Activated B cell treated with CpG ODN at 0.5 μM for 24 hours (primary cell): ENCODE measurements at regions of chr2 and their contacts with region 1.

Region 1: GRCh38 chr2:226906163-226906693 is 70.4 kb downstream of the RHBDD1 start:
- DNase-seq: no peak
- ATAC-seq: peak; percentile 84
- H3K4me3 Mint-ChIP-seq: peak overlapping the region; percentile 73
- H3K27ac Mint-ChIP-seq: peak overlapping the region; percentile 94
- H3K4me1 Mint-ChIP-seq: peaks cover 97% of the 10 kb centered on the region
- H3K27me3 Mint-ChIP-seq: no peaks in the 10 kb centered on the region
- CTCF ChIP-seq: no peak

Region 2: GRCh38 chr2:224946895-224947294 is 1959.3 kb before region 1 on chr2:
- CTCF ChIA-PET with region 1: no interaction called
- POLR2A ChIA-PET with region 1: no interaction called
- intact Hi-C with region 1: loop called (anchors 5 kb)
- DNase-seq: no peak
- ATAC-seq: peak; percentile 65
- H3K4me3 Mint-ChIP-seq: peak overlapping the region; percentile 90
- H3K27ac Mint-ChIP-seq: peak overlapping the region; percentile 92
- H3K4me1 Mint-ChIP-seq: peaks cover 87% of the 10 kb centered on the region
- H3K27me3 Mint-ChIP-seq: no peaks in the 10 kb centered on the region
- CTCF ChIP-seq: no peak

Region 3: DNA sequence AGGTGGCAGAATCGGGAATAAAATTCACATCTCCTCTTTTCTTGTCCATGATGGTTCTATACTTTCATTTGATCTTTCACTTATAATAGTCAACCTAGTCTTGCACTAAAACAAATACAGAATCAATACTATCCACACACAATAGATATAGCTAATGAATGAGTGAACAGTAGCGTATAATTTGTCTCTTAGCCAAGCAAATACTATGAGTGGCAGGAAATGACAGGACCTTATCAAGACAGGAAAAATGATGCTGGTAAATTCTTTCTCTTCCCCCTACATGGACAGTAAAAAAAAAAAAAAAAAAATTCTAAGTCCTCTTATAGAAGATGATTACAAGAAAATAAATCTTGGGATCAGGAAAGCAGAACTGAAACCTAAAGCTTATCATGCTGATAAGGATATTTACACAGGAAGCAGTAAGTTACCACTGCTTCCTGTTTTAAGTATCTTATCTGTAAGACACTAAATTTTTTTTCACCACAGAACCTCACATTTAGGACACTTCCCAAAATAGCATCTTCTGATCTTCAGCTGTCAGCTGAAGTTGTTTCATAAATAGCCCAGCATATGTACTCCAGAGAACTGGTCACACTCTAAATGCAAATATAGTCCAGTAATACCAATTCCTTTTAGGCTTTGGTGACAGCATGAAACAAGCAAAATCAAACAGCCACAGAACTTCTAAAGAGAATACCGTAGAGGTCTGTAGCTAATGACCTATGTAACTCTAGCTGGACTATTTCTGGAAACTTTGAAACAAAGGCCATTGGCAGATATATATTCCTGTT is 133.6 kb before region 1 on chr2:
- CTCF ChIA-PET with region 1: no interaction called
- POLR2A ChIA-PET with region 1: interaction called, 4 read pairs
- intact Hi-C with region 1: loop called (anchors 1 kb)
- DNase-seq: no peak
- ATAC-seq: peak; percentile 83
- H3K4me3 Mint-ChIP-seq: peak overlapping the region; percentile 35
- H3K27ac Mint-ChIP-seq: peak overlapping the region; percentile 71
- H3K4me1 Mint-ChIP-seq: peaks cover 49% of the 10 kb centered on the region
- H3K27me3 Mint-ChIP-seq: no peaks in the 10 kb centered on the region
- CTCF ChIP-seq: no peak

Region 4: DNA sequence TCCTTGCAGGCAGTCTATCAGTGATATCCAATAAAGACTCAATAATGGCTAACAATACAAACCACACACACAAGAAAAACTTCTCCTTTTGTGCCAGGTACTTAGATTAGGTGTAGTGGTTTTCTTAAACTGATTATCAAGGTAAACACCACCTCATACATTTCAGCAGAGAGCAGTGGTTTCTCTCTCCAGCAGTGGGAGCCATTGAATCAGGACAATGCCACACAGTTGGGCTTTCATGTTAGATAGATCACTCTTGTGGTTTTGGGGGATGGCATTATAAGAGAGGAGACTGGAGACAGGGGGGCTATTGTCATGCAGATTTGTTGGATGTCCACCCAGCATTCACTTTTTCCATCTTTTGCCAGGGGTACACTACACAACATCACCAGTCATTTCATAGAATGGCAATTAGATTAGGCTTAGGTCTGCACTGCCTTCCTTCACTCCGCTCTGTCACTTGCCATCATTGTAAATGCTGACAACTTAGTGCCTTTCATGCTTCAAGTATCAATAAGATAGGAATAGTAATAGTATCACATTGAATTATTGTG is 93.0 kb before region 1 on chr2:
- CTCF ChIA-PET with region 1: no interaction called
- POLR2A ChIA-PET with region 1: no interaction called
- intact Hi-C with region 1: no loop called
- DNase-seq: no peak
- ATAC-seq: no peak
- H3K4me3 Mint-ChIP-seq: no peak overlapping the region
- H3K27ac Mint-ChIP-seq: no peak overlapping the region
- H3K4me1 Mint-ChIP-seq: no peaks in the 10 kb centered on the region
- H3K27me3 Mint-ChIP-seq: peaks cover 20% of the 10 kb centered on the region
- CTCF ChIP-seq: no peak

Region 5: GRCh38 chr2:226845386-226846116 is 60.7 kb before region 1 on chr2:
- CTCF ChIA-PET with region 1: no interaction called
- POLR2A ChIA-PET with region 1: interaction called, 5 read pairs
- intact Hi-C with region 1: loop called (anchors 1 kb)
- DNase-seq: no peak
- ATAC-seq: no peak
- H3K4me3 Mint-ChIP-seq: no peak overlapping the region
- H3K27ac Mint-ChIP-seq: no peak overlapping the region
- H3K4me1 Mint-ChIP-seq: peaks cover 60% of the 10 kb centered on the region
- H3K27me3 Mint-ChIP-seq: no peaks in the 10 kb centered on the region
- CTCF ChIP-seq: no peak

Region 6: DNA sequence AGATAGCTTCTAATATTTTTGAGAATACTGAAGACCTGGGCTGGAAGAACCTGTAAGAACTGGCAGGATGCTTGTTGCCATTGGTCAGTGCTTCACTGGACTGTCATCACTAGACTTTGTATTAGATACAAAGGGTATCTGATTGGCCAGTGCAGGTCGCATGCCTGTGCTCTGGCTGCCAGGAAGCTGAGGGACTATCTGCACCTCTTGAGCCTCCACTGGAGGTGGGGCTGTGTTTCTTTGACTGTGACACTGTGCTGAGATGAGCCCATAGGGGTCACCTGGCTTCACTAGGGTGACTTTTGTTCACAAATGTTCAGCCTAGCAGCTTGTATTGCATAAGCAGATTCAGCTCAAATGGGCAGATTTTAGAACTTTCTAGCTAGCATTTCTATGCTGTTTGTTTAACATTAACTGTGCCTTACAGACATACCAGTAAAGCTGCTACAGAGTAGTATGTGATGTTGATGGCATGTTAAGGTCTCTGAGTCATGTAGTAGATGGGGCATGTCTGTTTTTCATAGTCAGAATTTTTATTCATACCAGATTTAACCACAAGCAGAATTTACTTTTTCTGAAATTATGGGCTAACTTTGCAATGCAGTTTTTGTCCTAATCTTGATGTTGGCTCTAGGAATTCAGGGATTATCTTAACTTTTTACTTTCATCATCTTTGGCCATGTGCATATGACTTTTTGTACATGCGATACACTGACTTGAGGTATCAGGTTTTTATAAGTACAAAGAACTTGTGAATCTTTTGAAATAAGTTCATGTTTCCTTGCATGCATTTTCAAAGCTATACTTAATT is 14.2 kb before region 1 on chr2:
- CTCF ChIA-PET with region 1: interaction called, 6 read pairs
- POLR2A ChIA-PET with region 1: interaction called, 5 read pairs
- intact Hi-C with region 1: loop called (anchors 1 kb)
- DNase-seq: no peak
- ATAC-seq: peak; percentile 58
- H3K4me3 Mint-ChIP-seq: no peak overlapping the region
- H3K27ac Mint-ChIP-seq: peak overlapping the region; percentile 14
- H3K4me1 Mint-ChIP-seq: peaks cover 19% of the 10 kb centered on the region
- H3K27me3 Mint-ChIP-seq: no peaks in the 10 kb centered on the region
- CTCF ChIP-seq: no peak

Region 7: GRCh38 chr2:226971084-226971483 is 64.9 kb after region 1 on chr2:
- CTCF ChIA-PET with region 1: interaction called, 3 read pairs
- POLR2A ChIA-PET with region 1: interaction called, 5 read pairs
- intact Hi-C with region 1: loop called (anchors 1 kb)
- DNase-seq: no peak
- ATAC-seq: peak; percentile 77
- H3K4me3 Mint-ChIP-seq: peak overlapping the region; percentile 84
- H3K27ac Mint-ChIP-seq: peak overlapping the region; percentile 97
- H3K4me1 Mint-ChIP-seq: peaks cover 42% of the 10 kb centered on the region
- H3K27me3 Mint-ChIP-seq: no peaks in the 10 kb centered on the region
- CTCF ChIP-seq: no peak

Region 8: GRCh38 chr2:227052879-227053278 is 146.7 kb after region 1 on chr2:
- CTCF ChIA-PET with region 1: no interaction called
- POLR2A ChIA-PET with region 1: no interaction called
- intact Hi-C with region 1: no loop called
- DNase-seq: no peak
- ATAC-seq: no peak
- H3K4me3 Mint-ChIP-seq: no peak overlapping the region
- H3K27ac Mint-ChIP-seq: no peak overlapping the region
- H3K4me1 Mint-ChIP-seq: no peaks in the 10 kb centered on the region
- H3K27me3 Mint-ChIP-seq: no peaks in the 10 kb centered on the region
- CTCF ChIP-seq: no peak

Region 9: GRCh38 chr2:227460070-227460485 is 553.9 kb after region 1 on chr2:
- CTCF ChIA-PET with region 1: no interaction called
- POLR2A ChIA-PET with region 1: interaction called, 5 read pairs
- intact Hi-C with region 1: loop called (anchors 5 kb)
- DNase-seq: peak; percentile 53
- ATAC-seq: peak; percentile 78
- H3K4me3 Mint-ChIP-seq: peak overlapping the region; percentile 63
- H3K27ac Mint-ChIP-seq: peak overlapping the region; percentile 79
- H3K4me1 Mint-ChIP-seq: peaks cover 76% of the 10 kb centered on the region
- H3K27me3 Mint-ChIP-seq: no peaks in the 10 kb centered on the region
- CTCF ChIP-seq: no peak